Aorta (tissue), 5 donors: ENCODE measurements at regions of chr11 and their contacts with region 1.

Region 1: GRCh38 chr11:44538375-44539054 is 26.9 kb upstream of the CD82 start:
- DNase-seq: peak; percentile 75 to 90
- ATAC-seq: peak; percentile 91
- H3K4me3 ChIP-seq: no peak overlapping the region
- H3K27ac ChIP-seq: no peak overlapping the region
- H3K4me1 ChIP-seq: no peaks in the 10 kb centered on the region
- H3K27me3 ChIP-seq: no peaks in the 10 kb centered on the region

Region 2: GRCh38 chr11:44095506-44096394 is 442.8 kb before region 1 on chr11 and contains the start of gene EXT2:
- intact Hi-C with region 1: loop called (anchors 5 kb)
- DNase-seq: peak; percentile 92 to 97
- ATAC-seq: peak; percentile 97
- H3K4me3 ChIP-seq: peak within 1 kb of the TSS; percentile 94 to 96
- H3K27ac ChIP-seq: peak within 1 kb of the TSS in 1 of 2 donors; percentile 60
- H3K4me1 ChIP-seq: no peaks in the 10 kb centered on the region
- H3K27me3 ChIP-seq: no peaks in the 10 kb centered on the region
- total RNA-seq, gene EXT2: 58.0 to 69.4 TPM

Region 3: GRCh38 chr11:44110231-44110679 is 428.3 kb before region 1 on chr11:
- intact Hi-C with region 1: loop called (anchors 5 kb)
- DNase-seq: peak in 1 of 2 donors; percentile 56
- ATAC-seq: peak; percentile 74
- H3K4me3 ChIP-seq: no peak overlapping the region
- H3K27ac ChIP-seq: no peak overlapping the region
- H3K4me1 ChIP-seq: no peaks in the 10 kb centered on the region
- H3K27me3 ChIP-seq: no peaks in the 10 kb centered on the region

Region 4: DNA sequence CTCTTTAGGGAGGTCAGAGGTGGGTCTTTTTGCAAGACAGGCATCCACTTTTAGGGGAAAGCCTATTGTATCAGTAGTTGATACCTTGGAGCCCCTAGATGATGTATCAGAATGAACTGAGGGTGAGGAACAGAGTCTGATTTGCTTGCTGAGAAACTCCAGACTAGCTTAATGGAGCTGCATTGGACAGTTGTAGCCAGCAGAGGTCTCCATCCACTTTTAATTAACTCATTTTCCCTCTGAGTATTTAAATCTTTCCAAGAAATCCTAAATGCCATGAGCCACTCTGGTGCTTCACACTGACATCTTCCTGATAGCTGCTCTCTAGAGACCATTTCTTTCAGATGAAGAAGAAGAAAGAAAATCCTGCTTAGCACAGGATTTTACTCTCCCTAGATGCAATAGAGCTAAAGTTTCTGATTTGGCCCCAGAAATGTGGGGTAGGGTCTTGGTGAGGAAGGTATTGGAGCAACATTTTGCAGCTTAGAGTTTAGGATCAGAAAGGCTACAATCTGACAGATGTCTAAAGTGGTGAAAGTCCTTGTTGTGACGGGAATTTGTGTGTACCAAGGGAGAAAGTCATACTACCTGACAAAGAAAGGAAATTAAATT is 405.1 kb before region 1 on chr11:
- intact Hi-C with region 1: loop called in 1 of 2 experiments (anchors 10 kb)
- DNase-seq: no peak
- ATAC-seq: peak; percentile 44
- H3K4me3 ChIP-seq: no peak overlapping the region
- H3K27ac ChIP-seq: no peak overlapping the region
- H3K4me1 ChIP-seq: no peaks in the 10 kb centered on the region
- H3K27me3 ChIP-seq: no peaks in the 10 kb centered on the region

Region 5: GRCh38 chr11:44286268-44286880 is 252.1 kb before region 1 on chr11:
- intact Hi-C with region 1: loop called (anchors 1 kb)
- DNase-seq: peak in 1 of 2 donors; percentile 86
- ATAC-seq: peak; percentile 76
- H3K4me3 ChIP-seq: no peak overlapping the region
- H3K27ac ChIP-seq: no peak overlapping the region
- H3K4me1 ChIP-seq: no peaks in the 10 kb centered on the region
- H3K27me3 ChIP-seq: no peaks in the 10 kb centered on the region